Colonic mucosa (tissue), 4 donors: ENCODE measurements at regions of chr17 and their contacts with region 1.

Region 1: DNA sequence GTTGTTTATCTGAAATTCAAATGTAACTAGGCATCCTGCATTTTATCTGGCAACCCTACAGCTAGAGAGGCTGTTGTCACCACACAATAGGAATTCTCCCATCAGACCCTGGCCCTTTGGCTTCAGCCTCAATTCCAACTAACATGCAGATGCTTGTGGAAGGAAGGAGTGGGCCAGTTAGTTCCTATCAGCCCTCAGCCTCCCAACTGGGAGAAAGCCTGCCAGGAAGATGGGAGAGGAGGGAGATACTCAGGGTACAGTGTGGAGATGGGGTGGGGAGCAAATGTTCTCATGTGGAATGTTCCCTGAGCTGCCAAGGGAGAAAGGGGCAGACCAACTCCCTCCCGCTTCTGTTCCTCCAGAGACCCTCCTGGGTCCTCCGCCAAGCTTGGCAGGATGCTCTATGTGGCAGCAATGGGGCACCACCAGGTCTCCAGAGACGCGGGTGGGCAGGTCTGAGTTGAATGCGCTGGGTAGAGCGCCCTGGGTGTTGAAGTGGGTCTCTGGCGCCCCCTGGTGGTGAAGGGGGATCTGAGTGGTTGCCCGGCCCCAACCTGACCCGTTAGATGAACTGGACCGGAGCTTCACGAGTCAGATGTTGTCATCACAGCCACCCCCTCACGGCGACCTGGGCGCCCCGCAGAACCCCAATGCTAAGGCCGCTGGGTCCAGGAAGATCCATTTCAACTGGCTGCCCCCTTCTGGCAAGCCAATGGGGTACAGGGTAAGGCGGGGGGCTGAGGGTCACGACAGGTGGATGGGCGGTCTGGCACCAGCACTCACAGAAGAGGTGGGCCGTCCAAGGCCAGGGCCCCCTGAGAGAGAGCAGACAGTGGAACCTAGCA is 15.2 kb downstream of the GALK1 start:
- DNase-seq: peak; percentile 87
- H3K4me3 ChIP-seq: no peak overlapping the region
- H3K27ac ChIP-seq: no peak overlapping the region
- H3K4me1 ChIP-seq: no peaks in the 10 kb centered on the region
- H3K27me3 ChIP-seq: no peaks in the 10 kb centered on the region
- CTCF ChIP-seq: peak; percentile 92

Region 2: GRCh38 chr17:75632863-75633485 is 116.8 kb before region 1 on chr17 and contains the start of gene SMIM5:
- intact Hi-C with region 1: loop called (anchors 5 kb)
- DNase-seq: peak; percentile 89
- H3K4me3 ChIP-seq: no peak within 1 kb of the TSS
- H3K27ac ChIP-seq: peak within 1 kb of the TSS; percentile 73
- H3K4me1 ChIP-seq: peaks cover 22% of the 10 kb centered on the region
- H3K27me3 ChIP-seq: no peaks in the 10 kb centered on the region
- CTCF ChIP-seq: peak; percentile 96
- total RNA-seq, gene SMIM5: 5.1 to 39.9 TPM

Region 3: DNA sequence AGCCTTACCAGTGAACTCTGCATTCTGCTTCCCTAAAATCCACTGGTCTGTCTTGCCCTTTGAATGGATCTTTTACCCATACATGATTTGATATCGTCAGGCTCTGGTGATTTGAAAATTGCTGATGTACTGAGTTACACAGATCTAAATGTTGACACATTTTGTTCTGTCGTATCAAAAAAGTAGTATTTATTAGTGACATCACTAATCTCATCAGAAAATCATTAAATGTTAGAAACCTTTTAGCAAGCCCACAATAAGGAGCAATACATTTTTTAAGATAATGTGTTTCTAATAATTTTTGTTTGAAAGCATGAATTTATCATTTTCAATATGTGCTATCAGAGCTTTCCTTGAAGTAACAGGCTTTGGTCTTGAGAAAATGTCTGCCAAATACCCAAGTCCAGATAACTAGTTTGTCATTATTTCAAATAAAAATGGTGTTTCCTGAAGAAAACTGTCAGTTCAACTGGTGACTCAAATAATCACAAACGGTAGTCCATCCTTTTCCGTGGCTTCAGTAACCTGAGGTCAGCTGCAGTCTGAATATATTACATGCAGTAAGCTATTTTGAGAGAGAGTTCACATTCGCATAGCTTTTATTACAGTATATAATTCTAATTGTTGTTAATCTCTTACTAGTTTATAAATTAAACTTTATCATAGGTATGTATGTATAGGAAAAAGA is 73.5 kb before region 1 on chr17:
- intact Hi-C with region 1: loop called (anchors 2 kb)
- DNase-seq: no peak
- H3K4me3 ChIP-seq: no peak overlapping the region
- H3K27ac ChIP-seq: no peak overlapping the region
- H3K4me1 ChIP-seq: peaks cover 5% of the 10 kb centered on the region
- H3K27me3 ChIP-seq: no peaks in the 10 kb centered on the region
- CTCF ChIP-seq: no peak

Region 4: GRCh38 chr17:76219670-76220383 is 470.1 kb after region 1 on chr17:
- intact Hi-C with region 1: no loop called
- DNase-seq: no peak
- H3K4me3 ChIP-seq: no peak overlapping the region
- H3K27ac ChIP-seq: no peak overlapping the region
- H3K4me1 ChIP-seq: no peaks in the 10 kb centered on the region
- H3K27me3 ChIP-seq: no peaks in the 10 kb centered on the region
- CTCF ChIP-seq: no peak